ENCODE measurements at regions of chr6 and their contacts with region 1.

Region 1: DNA sequence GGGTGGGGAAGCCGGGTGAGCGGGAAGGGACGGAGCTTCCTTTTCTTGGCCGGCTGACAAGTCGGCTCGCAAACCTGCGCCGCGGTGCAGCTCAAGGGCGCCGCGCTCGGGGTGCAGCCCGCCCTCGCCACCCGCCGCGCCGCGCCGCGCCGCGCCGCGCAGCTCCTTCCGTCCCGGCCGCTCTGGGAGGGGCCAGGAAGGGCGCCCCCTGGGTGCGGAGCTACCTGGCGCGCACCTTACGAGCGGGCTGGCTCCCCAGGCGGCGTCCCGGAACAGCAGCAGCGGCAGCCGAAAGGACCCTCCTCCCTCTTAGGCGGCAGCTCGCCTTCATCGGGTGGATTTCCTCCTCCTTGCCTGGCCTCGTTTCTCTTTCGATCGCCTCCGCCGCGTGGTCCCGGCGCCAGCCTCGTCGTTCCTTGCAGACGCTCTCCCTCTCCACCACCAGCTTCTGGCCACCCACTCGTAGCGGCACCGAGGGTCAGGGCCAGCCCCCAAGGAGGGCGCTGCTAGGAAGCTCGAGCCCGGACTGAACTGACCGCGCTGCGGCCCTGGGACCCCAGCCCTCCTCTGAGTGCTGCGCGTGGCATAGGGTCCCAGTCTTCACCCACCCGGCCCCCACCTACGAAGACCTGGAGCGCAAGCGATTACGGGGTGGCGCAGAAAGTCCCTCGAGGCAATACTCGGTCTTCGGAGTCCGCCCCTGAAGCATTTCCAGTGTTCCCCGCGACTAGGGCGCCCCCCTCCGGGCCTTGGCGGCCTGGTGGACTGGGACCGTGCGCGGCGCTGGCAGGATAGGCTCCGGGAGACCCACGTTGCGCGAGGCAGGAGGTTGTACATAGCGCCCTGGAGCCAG is at the start of gene MAP3K5:
- DNase-seq: peak; percentile 89
- H3K4me3 ChIP-seq: peak within 1 kb of the TSS; percentile 60 to 86 (median 70)
- H3K27ac ChIP-seq: peak within 1 kb of the TSS; percentile 51
- H3K4me1 ChIP-seq: peaks cover 16% of the 10 kb centered on the region
- H3K27me3 ChIP-seq: no peaks in the 10 kb centered on the region
- CTCF ChIP-seq: peak; percentile 85 to 93
- POLR2A ChIP-seq: peak; percentile 23
- total RNA-seq, gene MAP3K5: 5.0 and 7.0 TPM in 2 replicates

Region 2: GRCh38 chr6:136289579-136290409 is 502.8 kb before region 1 on chr6 and contains the start of gene BCLAF1:
- CTCF ChIA-PET with region 1: interaction called, 4 read pairs
- POLR2A ChIA-PET with region 1: no interaction called
- dilution Hi-C with region 1: no loop called
- intact Hi-C with region 1: loop called (anchors 2 kb)
- DNase-seq: peak; percentile 100
- H3K4me3 ChIP-seq: peak within 1 kb of the TSS; percentile 38 to 90 (median 70)
- H3K27ac ChIP-seq: peak within 1 kb of the TSS; percentile 96
- H3K4me1 ChIP-seq: peaks cover 30% of the 10 kb centered on the region
- H3K27me3 ChIP-seq: peaks cover 0 to 3% of the 10 kb centered on the region in 2 experiments
- CTCF ChIP-seq: no peak
- POLR2A ChIP-seq: peak; percentile 98
- total RNA-seq, gene BCLAF1: 151 and 156 TPM in 2 replicates

Region 3: DNA sequence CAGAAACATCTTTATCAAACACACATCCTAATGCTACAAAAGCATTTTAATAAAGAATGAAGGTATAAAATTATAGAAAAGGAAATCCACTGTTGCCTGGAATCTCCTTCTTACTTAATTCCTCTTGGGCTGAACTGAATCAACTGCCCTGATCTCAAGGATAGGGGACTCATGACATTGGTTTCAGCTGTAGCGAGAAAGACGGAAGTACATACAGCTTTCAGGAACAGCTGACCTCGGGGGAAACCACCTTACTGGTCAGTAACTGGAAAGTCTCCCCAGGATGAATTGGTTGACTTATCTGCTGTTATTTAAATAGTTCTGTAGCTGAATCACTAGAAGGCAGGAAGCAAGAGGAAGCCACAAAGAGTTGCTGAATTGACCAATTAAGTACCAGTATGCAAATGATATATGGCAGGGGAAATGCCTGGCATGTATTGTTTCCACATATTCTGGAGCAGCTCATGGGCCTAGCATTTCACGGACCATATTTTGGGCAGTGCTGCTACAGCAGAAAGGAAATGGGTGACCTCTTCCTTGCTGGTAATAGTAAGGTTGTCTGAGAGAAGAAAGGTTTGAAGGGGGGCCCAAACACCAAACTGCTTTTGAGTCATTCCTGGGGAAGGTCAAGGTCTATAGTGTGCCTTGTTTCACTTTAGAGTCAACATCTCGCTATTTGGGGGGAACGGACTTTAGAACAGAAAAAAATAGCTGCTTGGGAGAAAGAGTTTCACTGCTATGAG is 198.7 kb before region 1 on chr6:
- CTCF ChIA-PET with region 1: interaction called, 32 read pairs
- POLR2A ChIA-PET with region 1: interaction called, 3 read pairs
- dilution Hi-C with region 1: no loop called
- intact Hi-C with region 1: loop called (anchors 1 kb)
- DNase-seq: peak; percentile 97
- H3K4me3 ChIP-seq: peak overlapping the region in 1 of 3 experiments; percentile 31
- H3K27ac ChIP-seq: peak overlapping the region; percentile 88
- H3K4me1 ChIP-seq: peaks cover 20% of the 10 kb centered on the region
- H3K27me3 ChIP-seq: no peaks in the 10 kb centered on the region
- CTCF ChIP-seq: no peak
- POLR2A ChIP-seq: no peak

Region 4: DNA sequence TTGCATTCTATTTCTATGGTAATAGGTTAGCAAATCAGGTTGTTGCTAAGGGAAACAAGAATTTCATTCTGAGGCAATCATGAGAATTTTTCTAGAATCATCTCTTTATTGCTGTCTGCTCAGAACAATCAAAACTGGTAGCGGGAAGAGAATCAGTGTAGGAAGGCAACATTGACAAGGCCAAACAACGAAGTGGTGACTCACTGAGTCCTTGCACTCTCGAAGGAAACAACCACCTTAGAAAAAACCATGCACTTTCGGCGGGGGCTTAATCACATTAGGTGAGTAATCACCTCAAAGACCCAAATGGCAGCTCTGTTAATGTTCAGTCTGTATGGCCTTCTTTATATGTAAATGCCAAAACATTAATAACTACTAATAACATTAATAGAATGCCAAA is 163.6 kb before region 1 on chr6:
- CTCF ChIA-PET with region 1: interaction called, 11 read pairs
- POLR2A ChIA-PET with region 1: no interaction called
- dilution Hi-C with region 1: no loop called
- intact Hi-C with region 1: no loop called
- DNase-seq: peak; percentile 36
- H3K4me3 ChIP-seq: no peak overlapping the region
- H3K27ac ChIP-seq: no peak overlapping the region
- H3K4me1 ChIP-seq: no peaks in the 10 kb centered on the region
- H3K27me3 ChIP-seq: no peaks in the 10 kb centered on the region
- CTCF ChIP-seq: no peak
- POLR2A ChIP-seq: no peak

Region 5: DNA sequence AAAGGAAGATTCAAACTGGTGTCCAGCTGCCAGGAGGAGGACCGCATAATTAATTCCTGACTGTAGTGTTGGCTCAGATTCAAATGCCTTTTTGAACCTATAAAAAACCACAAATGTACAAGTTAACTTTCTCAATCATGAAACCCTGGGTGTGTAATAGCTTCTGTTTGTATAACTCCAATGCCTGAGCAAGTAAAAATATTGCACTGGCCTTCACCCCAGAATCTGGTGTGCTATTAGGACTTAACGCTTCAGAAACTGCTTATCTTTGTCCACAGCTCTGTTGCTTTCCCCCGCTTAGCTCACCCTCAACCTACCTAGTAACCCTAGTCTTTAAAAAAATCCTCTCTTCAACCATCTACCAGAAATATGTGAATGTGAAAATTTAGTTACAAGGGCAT is 123.3 kb before region 1 on chr6:
- CTCF ChIA-PET with region 1: interaction called, 19 read pairs
- POLR2A ChIA-PET with region 1: no interaction called
- dilution Hi-C with region 1: no loop called
- intact Hi-C with region 1: no loop called
- DNase-seq: peak; percentile 69
- H3K4me3 ChIP-seq: no peak overlapping the region
- H3K27ac ChIP-seq: no peak overlapping the region
- H3K4me1 ChIP-seq: peaks cover 6% of the 10 kb centered on the region
- H3K27me3 ChIP-seq: no peaks in the 10 kb centered on the region
- CTCF ChIP-seq: no peak
- POLR2A ChIP-seq: no peak

Region 6: DNA sequence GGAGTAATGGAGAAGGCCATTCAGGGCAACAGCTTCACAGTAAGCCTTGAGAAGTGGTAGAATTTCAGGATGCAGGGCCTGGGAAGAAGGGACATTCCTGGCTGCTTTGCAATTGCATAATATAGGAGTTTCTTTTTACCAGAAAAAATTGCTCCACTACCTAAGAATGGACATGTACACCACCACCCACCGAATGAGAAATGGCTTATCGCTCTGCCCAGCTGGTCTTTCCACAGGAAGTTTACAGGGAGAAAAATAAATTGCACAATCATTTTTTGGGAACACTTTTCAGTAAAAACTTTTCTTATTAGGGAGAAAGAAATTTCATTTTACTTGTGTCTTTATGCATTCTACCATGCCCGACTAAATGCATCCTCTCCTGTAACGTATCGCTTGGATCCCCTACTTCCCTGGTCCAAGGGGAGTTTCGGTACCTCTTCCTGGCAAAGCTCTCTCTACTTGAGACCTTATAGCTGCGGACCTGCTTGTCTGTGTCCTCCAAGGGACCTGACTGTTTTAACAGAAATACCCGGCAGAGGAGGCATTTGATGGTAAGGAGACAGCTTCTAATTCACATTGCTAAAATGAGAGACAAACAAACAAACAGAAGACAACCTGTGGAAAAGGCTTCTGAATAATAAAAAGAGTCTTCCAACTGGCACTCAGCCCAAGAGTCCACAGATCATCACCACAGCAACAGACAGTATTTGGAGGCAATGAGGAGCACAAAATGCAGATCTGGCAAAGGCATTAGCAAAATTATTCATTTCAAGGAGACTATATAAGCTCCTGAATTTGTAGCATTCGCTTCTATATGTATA is 54.6 kb before region 1 on chr6:
- CTCF ChIA-PET with region 1: interaction called, 18 read pairs
- POLR2A ChIA-PET with region 1: no interaction called
- dilution Hi-C with region 1: no loop called
- intact Hi-C with region 1: no loop called
- DNase-seq: peak; percentile 70
- H3K4me3 ChIP-seq: no peak overlapping the region
- H3K27ac ChIP-seq: no peak overlapping the region
- H3K4me1 ChIP-seq: peaks cover 4% of the 10 kb centered on the region
- H3K27me3 ChIP-seq: no peaks in the 10 kb centered on the region
- CTCF ChIP-seq: no peak
- POLR2A ChIP-seq: no peak

Region 7: DNA sequence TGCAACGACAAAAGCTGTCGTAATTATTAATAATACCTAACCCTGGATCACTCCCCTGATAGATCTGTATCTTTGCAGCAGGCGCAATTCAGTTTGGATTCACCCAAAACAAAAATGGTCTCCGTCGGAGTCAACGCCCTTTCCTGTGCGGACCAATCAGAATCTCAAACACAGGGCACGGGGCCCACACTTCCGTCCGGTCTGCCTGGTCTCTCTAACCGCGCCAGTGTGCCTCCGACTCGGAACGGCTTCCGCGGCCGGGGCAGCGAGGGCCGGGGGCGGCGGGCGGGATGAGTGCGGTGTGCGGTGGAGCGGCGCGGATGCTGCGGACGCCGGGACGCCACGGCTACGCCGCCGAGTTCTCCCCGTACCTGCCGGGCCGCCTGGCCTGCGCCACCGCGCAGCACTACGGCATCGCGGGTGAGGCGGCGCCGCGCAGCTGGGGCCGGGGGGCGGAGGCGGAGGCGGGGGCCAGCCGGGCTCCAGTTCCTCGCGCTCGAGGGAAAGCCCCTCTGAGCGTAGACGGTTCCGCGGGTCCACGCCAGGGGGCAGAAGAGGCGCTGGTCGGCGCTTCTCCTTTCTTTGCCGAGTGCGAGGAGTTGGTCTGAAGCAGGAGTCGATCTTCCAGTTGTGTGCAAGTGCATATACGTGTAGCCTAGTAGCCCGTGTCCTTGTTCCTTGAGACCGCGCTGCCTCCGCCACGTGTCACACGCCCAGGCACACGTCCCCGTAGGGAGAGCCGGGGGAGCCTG is 29.9 kb after region 1 on chr6 and contains the start of gene PEX7:
- CTCF ChIA-PET with region 1: interaction called, 10 read pairs
- POLR2A ChIA-PET with region 1: no interaction called
- dilution Hi-C with region 1: no loop called
- intact Hi-C with region 1: loop called (anchors 1 kb)
- DNase-seq: peak; percentile 92
- H3K4me3 ChIP-seq: peak within 1 kb of the TSS; percentile 35 to 89 (median 65)
- H3K27ac ChIP-seq: peak within 1 kb of the TSS; percentile 52
- H3K4me1 ChIP-seq: peaks cover 10% of the 10 kb centered on the region
- H3K27me3 ChIP-seq: no peaks in the 10 kb centered on the region
- CTCF ChIP-seq: peak; percentile 67 to 86
- POLR2A ChIP-seq: peak; percentile 73
- total RNA-seq, gene PEX7: 3.5 and 3.7 TPM in 2 replicates

Region 8: GRCh38 chr6:136886130-136886529 is 93.5 kb after region 1 on chr6:
- CTCF ChIA-PET with region 1: no interaction called
- POLR2A ChIA-PET with region 1: no interaction called
- dilution Hi-C with region 1: no loop called
- intact Hi-C with region 1: no loop called
- DNase-seq: no peak
- H3K4me3 ChIP-seq: no peak overlapping the region
- H3K27ac ChIP-seq: no peak overlapping the region
- H3K4me1 ChIP-seq: no peaks in the 10 kb centered on the region
- H3K27me3 ChIP-seq: no peaks in the 10 kb centered on the region
- CTCF ChIP-seq: no peak
- POLR2A ChIP-seq: no peak

Region 9: DNA sequence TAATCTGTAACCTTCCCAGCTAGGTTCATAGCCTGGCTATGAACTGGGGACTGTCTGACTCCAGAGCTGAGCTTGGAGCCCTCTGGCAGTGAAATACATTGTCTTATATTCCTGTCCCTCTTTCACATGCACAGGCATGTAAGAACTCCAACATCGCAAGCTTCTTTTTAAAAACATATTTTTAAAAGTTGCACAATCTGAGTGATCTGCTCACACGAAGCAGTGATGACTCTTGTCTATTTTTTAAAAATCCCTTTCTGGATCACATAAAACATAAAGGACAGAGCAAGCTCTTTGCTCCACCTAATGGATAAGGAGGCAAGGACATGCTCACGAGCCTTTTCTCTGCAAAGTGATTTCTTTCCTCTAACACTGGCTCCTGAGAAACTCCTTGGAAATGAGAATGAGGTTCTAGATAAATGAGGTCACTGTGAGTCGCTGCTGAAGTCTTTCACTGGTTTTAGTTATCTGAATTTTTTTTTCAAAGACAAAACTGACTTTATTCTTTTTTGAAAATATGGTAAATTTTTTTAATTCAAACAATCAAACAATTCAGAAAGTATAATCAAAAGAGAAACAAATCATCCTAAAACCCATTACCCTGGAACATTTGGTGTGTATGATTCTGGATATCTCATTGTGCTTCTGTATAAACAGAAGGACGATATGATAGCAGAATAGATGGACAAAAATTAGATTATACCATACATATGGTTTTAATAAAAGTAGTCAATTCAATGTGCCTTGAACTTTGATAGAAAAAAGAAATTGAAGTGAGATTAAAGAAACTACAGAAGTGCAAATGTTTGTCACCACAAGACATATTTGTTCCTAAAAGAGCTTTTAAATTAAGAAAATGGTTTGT is 221.3 kb after region 1 on chr6:
- CTCF ChIA-PET with region 1: no interaction called
- POLR2A ChIA-PET with region 1: no interaction called
- dilution Hi-C with region 1: no loop called
- intact Hi-C with region 1: no loop called
- DNase-seq: peak; percentile 27
- H3K4me3 ChIP-seq: no peak overlapping the region
- H3K27ac ChIP-seq: no peak overlapping the region
- H3K4me1 ChIP-seq: no peaks in the 10 kb centered on the region
- H3K27me3 ChIP-seq: peaks cover 5 to 23% of the 10 kb centered on the region in 2 experiments
- CTCF ChIP-seq: peak; percentile 6 to 40
- POLR2A ChIP-seq: no peak